B cell (primary cell): ENCODE measurements at regions of chr19 and their contacts with region 1.

Region 1: GRCh38 chr19:49676690-49677231 is 310 bp upstream of the PRMT1 start:
- DNase-seq: peak; percentile 100
- ATAC-seq: peak; percentile 69
- H3K4me3 ChIP-seq: peak overlapping the region; percentile 88 to 98 (median 97)
- H3K4me3 Mint-ChIP-seq: peak overlapping the region; percentile 100
- H3K27ac ChIP-seq: peak overlapping the region; percentile 93 to 98
- H3K27ac Mint-ChIP-seq: peak overlapping the region; percentile 96
- H3K4me1 ChIP-seq: peaks cover 42 to 78% of the 10 kb centered on the region in 2 donors
- H3K4me1 Mint-ChIP-seq: peaks cover 64% of the 10 kb centered on the region
- H3K27me3 ChIP-seq: no peaks in the 10 kb centered on the region
- H3K27me3 Mint-ChIP-seq: no peaks in the 10 kb centered on the region
- CTCF ChIP-seq: no peak

Region 2: DNA sequence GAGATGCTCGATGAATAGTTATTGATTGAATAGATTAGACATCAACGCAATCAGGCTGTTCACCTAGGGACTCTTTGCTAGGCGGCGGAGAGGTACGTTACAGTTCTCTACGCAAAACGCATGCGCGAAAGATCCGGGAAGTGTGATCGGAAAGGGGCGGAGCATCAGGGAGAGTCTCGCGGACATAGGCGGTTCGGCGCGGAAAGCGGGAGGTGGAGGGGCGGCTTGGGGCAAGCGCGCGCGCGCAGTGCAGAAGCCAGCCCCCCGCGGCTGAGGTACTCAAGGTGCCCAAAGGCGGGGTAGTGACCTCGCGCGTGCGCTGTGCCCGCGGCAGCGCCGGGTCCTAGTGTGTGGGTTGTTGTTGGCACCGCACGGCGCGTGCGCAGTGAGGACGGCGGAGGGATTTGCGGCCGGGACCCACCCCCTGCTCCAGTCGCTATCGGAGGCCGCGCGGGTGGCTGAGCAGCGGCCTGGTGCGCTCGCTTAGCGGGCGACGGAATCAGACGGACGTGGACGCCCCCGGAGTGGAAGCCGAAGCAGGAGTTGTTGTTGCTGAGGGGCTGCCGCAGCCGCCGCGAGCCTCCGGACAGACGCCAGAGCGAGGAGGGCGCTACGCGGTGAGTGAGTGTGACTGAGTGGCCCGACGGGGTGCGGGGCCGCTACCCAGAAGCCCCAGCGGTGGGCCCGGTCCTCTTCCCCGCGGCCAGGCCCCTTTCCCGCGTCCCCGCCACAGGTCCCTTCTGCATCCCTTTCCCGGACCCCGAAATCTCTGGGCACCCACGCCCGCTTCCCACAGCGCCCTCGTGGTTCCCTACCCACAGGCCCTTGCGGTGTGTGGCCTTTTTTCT is 591.5 kb before region 1 on chr19 and contains the start of gene SNRNP70:
- CTCF ChIA-PET with region 1: no interaction called
- POLR2A ChIA-PET with region 1: no interaction called
- intact Hi-C with region 1: loop called (anchors 1 kb)
- DNase-seq: peak; percentile 100
- ATAC-seq: peak; percentile 95
- H3K4me3 ChIP-seq: peak within 1 kb of the TSS; percentile 74 to 89 (median 82)
- H3K4me3 Mint-ChIP-seq: peak within 1 kb of the TSS; percentile 93
- H3K27ac ChIP-seq: peak within 1 kb of the TSS; percentile 66 to 90
- H3K27ac Mint-ChIP-seq: peak within 1 kb of the TSS; percentile 87
- H3K4me1 ChIP-seq: peaks cover 20 to 28% of the 10 kb centered on the region in 2 donors
- H3K4me1 Mint-ChIP-seq: peaks cover 33% of the 10 kb centered on the region
- H3K27me3 ChIP-seq: peaks cover 0 to 3% (median 0%) of the 10 kb centered on the region in 4 experiments
- H3K27me3 Mint-ChIP-seq: peaks cover 5% of the 10 kb centered on the region
- CTCF ChIP-seq: no peak
- total RNA-seq, gene SNRNP70: 598 and 610 TPM in 2 replicates

Region 3: GRCh38 chr19:49451430-49452181 is 225.2 kb before region 1 on chr19 and contains the start of gene PIH1D1:
- CTCF ChIA-PET with region 1: interaction called, 3 read pairs
- POLR2A ChIA-PET with region 1: interaction called, 9 read pairs
- intact Hi-C with region 1: loop called (anchors 1 kb)
- DNase-seq: peak; percentile 98
- ATAC-seq: peak; percentile 57
- H3K4me3 ChIP-seq: peak within 1 kb of the TSS; percentile 87 to 100 (median 99)
- H3K4me3 Mint-ChIP-seq: peak within 1 kb of the TSS; percentile 99
- H3K27ac ChIP-seq: peak within 1 kb of the TSS; percentile 99
- H3K27ac Mint-ChIP-seq: peak within 1 kb of the TSS; percentile 100
- H3K4me1 ChIP-seq: peaks cover 23 to 36% of the 10 kb centered on the region in 2 donors
- H3K4me1 Mint-ChIP-seq: peaks cover 46% of the 10 kb centered on the region
- H3K27me3 ChIP-seq: no peaks in the 10 kb centered on the region
- H3K27me3 Mint-ChIP-seq: no peaks in the 10 kb centered on the region
- CTCF ChIP-seq: no peak
- total RNA-seq, gene PIH1D1: 168 and 184 TPM in 2 replicates

Region 4: DNA sequence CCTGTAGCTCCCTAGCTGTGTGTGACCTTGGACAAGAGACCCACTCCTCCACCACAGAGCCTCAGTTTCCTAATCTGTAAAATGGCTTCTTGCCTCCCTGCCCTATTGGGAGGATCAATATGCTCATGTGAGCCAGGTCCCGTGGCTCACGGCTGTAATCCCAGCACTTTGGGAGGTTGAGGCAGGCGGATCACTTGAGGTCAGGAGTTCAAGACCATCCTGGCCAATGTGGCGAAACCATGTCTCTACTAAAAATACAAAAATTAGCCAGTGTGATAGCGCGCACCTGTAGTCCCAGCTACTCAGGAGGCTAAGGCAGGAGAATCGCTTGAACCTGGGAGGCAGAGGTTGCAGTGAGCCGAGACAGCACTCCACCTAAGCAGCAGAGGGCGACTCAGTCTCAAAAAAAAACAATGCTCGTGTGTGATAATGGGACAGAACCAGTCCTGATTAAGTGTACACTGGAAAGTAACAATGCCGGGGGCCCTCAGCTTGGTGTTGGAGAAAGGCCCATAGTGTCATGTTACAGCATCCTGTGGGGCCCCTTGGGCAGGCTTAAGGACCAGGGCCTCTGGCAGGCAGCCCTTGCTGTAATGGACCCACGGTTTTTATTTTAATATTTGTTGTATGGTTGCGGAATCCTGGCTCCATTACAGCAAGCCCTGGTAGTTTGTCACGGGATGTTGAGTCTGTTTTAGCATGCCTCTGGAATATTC is 173.7 kb before region 1 on chr19:
- CTCF ChIA-PET with region 1: interaction called, 50 read pairs
- POLR2A ChIA-PET with region 1: interaction called, 4 read pairs
- intact Hi-C with region 1: no loop called
- DNase-seq: peak; percentile 72
- ATAC-seq: no peak
- H3K4me3 ChIP-seq: no peak overlapping the region
- H3K4me3 Mint-ChIP-seq: no peak overlapping the region
- H3K27ac ChIP-seq: peak overlapping the region; percentile 89 to 98
- H3K27ac Mint-ChIP-seq: peak overlapping the region; percentile 99
- H3K4me1 ChIP-seq: peaks cover 31 to 55% of the 10 kb centered on the region in 2 donors
- H3K4me1 Mint-ChIP-seq: peaks cover 51% of the 10 kb centered on the region
- H3K27me3 ChIP-seq: no peaks in the 10 kb centered on the region
- H3K27me3 Mint-ChIP-seq: no peaks in the 10 kb centered on the region
- CTCF ChIP-seq: peak; percentile 70

Region 5: DNA sequence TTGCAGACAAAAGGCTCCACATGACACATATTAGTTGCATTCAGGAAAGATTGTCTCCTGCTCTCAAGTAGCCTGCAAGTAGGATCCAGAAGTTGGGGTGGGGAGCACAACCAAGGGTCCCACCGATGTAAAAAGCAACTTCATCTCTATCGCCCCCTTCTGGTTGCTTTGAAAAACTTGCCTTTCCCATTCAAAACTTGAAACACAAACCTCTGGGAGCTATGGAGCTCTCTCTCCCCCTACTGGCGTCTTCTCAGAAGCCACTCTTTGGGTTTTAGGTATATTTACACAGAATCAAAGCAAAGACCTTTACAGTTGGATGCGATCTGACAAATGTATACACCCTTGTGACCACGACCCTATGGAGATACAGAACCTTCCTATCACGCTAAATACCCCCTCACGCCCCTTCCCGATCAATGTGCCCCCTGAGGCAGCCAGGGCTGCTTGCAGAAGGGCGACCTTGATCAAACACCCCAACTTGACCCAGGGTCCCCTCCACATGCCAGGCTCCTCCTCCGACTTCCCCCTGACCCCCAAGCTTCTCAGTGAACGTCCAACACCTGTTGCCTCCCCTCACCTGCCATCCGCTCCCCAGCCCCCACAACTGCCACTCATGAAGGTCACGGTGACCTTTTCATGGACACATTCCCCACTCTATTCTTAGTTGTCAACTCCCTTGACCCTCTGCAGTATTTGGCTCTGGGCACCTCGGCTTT is 106.5 kb before region 1 on chr19:
- CTCF ChIA-PET with region 1: interaction called, 15 read pairs
- POLR2A ChIA-PET with region 1: interaction called, 6 read pairs
- intact Hi-C with region 1: no loop called
- DNase-seq: peak; percentile 89
- ATAC-seq: peak; percentile 82
- H3K4me3 ChIP-seq: no peak overlapping the region
- H3K4me3 Mint-ChIP-seq: peak overlapping the region; percentile 40
- H3K27ac ChIP-seq: peak overlapping the region in 1 of 2 donors; percentile 16
- H3K27ac Mint-ChIP-seq: peak overlapping the region; percentile 71
- H3K4me1 ChIP-seq: peaks cover 12 to 37% of the 10 kb centered on the region in 2 donors
- H3K4me1 Mint-ChIP-seq: peaks cover 25% of the 10 kb centered on the region
- H3K27me3 ChIP-seq: no peaks in the 10 kb centered on the region
- H3K27me3 Mint-ChIP-seq: no peaks in the 10 kb centered on the region
- CTCF ChIP-seq: peak; percentile 100

Region 6: DNA sequence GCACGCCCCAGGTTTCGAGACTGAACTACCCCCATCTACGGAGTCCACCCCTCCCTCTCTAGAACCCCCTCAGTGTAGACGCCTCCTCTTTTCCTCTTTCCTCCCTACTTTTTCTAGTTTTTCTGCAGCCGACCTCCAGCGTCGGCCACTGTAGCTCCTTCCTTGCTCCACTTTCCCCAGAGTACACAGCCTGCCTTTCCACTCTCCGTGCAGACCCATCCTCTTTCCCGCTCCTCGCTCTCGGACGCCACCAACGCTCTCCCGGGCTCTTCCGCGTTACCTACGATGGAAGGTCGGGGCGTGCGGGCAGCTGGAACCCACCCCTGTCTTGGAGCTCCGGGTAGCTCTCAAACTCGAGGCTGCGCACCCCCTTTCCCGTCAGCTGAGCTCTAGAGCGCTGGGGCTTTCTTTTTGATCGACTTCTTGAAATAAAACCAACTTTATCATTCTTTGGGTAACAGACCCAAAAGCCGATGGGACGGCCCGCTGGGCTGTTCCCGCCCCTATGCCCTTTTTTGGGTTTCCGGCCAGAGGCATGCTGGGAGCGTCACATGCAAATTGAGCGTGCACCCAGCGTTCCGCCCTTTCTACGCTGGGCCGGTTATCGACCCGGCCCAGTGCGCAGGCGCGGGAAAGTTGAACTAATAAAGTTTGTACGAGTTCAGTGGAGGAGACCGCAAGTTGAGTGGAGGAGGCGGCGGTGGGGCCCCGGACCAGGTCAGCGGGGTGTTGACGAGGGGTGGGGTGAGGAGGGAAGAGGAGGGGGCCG is 11.2 kb before region 1 on chr19 and contains the starts of genes BCL2L12 and IRF3:
- CTCF ChIA-PET with region 1: interaction called, 8 read pairs
- POLR2A ChIA-PET with region 1: interaction called, 12 read pairs
- intact Hi-C with region 1: loop called (anchors 1 kb)
- DNase-seq: peak; percentile 98
- ATAC-seq: peak; percentile 83
- H3K4me3 ChIP-seq: peak within 1 kb of the TSS; percentile 71 to 99 (median 94)
- H3K4me3 Mint-ChIP-seq: peak within 1 kb of the TSS; percentile 95
- H3K27ac ChIP-seq: peak within 1 kb of the TSS; percentile 62 to 73
- H3K27ac Mint-ChIP-seq: peak within 1 kb of the TSS; percentile 94
- H3K4me1 ChIP-seq: peaks cover 16 to 30% of the 10 kb centered on the region in 2 donors
- H3K4me1 Mint-ChIP-seq: peaks cover 37% of the 10 kb centered on the region
- H3K27me3 ChIP-seq: no peaks in the 10 kb centered on the region
- H3K27me3 Mint-ChIP-seq: no peaks in the 10 kb centered on the region
- CTCF ChIP-seq: no peak
- total RNA-seq, gene BCL2L12: 17.3 and 22.1 TPM in 2 replicates
- total RNA-seq, gene IRF3: 233 and 251 TPM in 2 replicates

Region 7: DNA sequence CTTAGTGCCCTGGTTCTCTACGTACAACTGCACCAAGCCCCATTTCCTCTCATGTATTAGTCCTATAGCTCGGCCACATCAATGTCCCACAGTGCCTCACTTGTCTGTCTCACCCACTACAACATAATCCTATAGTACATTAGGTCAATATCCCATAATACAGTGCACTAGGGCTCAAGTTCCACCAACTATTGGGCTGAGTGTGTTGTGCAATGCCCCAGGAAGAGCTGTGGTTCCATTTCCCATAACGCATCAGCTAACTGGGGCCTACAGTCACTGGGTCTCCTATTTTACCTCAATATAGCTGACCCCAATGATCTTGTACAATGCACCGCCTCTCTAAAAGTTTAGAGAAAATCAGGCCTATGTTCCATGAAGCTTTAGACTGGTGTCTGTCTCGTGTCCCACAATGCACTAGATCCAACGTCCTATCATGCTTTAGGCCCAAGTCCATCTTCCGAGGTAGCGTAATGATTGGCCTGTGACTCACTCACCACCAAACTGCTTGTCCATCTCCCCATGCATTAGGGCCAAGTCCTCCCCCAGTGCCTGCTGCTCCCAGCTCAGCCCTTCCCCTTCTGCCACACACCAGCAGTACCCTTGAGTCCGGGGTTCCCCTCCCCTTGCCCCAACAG is 64.6 kb after region 1 on chr19:
- CTCF ChIA-PET with region 1: no interaction called
- POLR2A ChIA-PET with region 1: no interaction called
- intact Hi-C with region 1: no loop called
- DNase-seq: no peak
- ATAC-seq: no peak
- H3K4me3 ChIP-seq: no peak overlapping the region
- H3K4me3 Mint-ChIP-seq: no peak overlapping the region
- H3K27ac ChIP-seq: no peak overlapping the region
- H3K27ac Mint-ChIP-seq: no peak overlapping the region
- H3K4me1 ChIP-seq: no peaks in the 10 kb centered on the region
- H3K4me1 Mint-ChIP-seq: no peaks in the 10 kb centered on the region
- H3K27me3 ChIP-seq: no peaks in the 10 kb centered on the region
- H3K27me3 Mint-ChIP-seq: no peaks in the 10 kb centered on the region
- CTCF ChIP-seq: no peak

Region 8: GRCh38 chr19:49877020-49877878 is 200.5 kb after region 1 on chr19 and contains the starts of genes AKT1S1 and TBC1D17:
- CTCF ChIA-PET with region 1: no interaction called
- POLR2A ChIA-PET with region 1: interaction called, 4 read pairs
- intact Hi-C with region 1: loop called (anchors 1 kb)
- DNase-seq: peak; percentile 100
- ATAC-seq: peak; percentile 65
- H3K4me3 ChIP-seq: peak within 1 kb of the TSS; percentile 85 to 96 (median 95)
- H3K4me3 Mint-ChIP-seq: no peak within 1 kb of the TSS
- H3K27ac ChIP-seq: peak within 1 kb of the TSS; percentile 94 to 98
- H3K27ac Mint-ChIP-seq: no peak within 1 kb of the TSS
- H3K4me1 ChIP-seq: peaks cover 12 to 20% of the 10 kb centered on the region in 2 donors
- H3K4me1 Mint-ChIP-seq: peaks cover 21% of the 10 kb centered on the region
- H3K27me3 ChIP-seq: no peaks in the 10 kb centered on the region
- H3K27me3 Mint-ChIP-seq: no peaks in the 10 kb centered on the region
- CTCF ChIP-seq: no peak
- total RNA-seq, gene AKT1S1: 23.0 and 25.2 TPM in 2 replicates
- total RNA-seq, gene TBC1D17: 94.3 and 98.7 TPM in 2 replicates

Region 9: DNA sequence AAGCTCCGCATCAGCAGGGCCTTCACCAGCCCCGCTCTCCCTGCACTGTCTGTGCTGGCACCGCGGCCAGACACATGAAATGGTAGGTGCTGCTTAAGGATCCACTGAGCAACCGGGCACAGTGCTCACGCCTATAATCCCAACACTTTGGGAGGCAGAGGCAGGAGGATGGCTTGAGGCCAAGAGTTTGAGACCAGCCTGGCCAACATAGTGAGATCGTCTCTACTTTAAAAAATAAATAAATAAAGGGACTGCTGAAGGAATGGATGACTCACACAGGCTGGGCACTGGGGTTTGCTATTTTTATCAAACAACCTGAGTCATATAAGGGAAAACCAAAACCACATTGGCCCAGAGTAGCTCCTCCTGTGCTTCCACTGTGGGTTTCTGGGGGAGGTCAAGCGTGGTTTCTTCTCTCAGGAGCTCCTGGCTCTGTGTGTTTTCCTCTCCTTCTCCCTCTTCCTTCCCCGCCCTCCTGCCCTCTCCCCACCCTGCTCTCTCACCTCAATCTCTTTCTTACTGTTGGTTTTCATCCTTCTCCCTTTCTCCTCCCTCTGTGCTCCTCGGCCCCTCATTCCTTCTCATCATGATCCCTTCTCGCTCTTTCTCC is 327.2 kb after region 1 on chr19:
- CTCF ChIA-PET with region 1: no interaction called
- POLR2A ChIA-PET with region 1: no interaction called
- intact Hi-C with region 1: no loop called
- DNase-seq: no peak
- ATAC-seq: no peak
- H3K4me3 ChIP-seq: no peak overlapping the region
- H3K4me3 Mint-ChIP-seq: no peak overlapping the region
- H3K27ac ChIP-seq: no peak overlapping the region
- H3K27ac Mint-ChIP-seq: peak overlapping the region; percentile 53
- H3K4me1 ChIP-seq: no peaks in the 10 kb centered on the region
- H3K4me1 Mint-ChIP-seq: peaks cover 2% of the 10 kb centered on the region
- H3K27me3 ChIP-seq: no peaks in the 10 kb centered on the region
- H3K27me3 Mint-ChIP-seq: no peaks in the 10 kb centered on the region
- CTCF ChIP-seq: no peak